Endothelial cell of umbilical vein (primary cell): ENCODE measurements at regions of chr13 and their contacts with region 1.

Region 1: DNA sequence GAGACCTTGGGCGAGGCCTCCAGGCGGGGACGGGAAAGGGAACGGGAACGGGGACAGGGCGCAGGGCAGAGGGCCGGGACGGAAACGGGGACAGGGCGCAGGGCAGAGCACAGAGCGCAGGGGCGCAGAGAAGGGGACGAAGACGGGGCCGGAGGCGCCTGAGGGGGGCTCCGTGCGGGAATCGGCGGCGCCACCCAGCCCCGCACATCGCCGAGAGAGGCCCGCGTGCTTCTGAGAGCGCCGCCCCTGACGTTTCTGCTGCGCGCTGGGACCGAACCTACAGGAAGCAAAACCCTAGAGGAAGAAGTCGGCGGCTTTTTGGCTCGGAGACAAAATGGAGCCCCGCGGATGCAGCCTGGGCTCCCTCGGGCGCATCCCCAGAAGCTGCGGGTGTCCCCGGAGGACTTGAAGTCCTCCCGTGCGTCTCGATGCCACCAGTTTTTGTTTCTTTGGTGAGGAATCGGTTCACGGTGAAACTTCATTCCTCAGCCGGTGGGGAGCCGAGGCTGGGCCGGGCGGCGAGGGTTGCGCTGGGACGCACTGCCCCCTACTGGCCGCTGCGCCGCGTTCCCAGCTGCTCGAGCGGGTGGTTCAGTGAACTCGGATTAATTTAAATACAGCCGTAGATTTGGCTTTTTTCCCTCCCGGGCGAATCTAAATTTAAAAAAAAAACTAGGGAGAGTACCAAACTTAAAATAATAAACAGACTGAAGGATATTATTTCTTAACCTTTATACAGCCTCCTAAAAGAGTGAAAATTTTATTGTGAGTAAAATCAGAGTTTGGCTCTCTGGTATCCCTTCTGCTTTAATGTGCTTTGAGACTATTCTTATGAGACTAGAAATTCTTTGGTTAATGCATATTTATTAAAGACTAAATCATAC is 350.0 kb upstream of the ARGLU1 start:
- DNase-seq: peak; percentile 91
- H3K4me3 ChIP-seq: peak overlapping the region; percentile 44 to 74 (median 51)
- H3K27ac ChIP-seq: peak overlapping the region; percentile 90
- H3K4me1 ChIP-seq: peaks cover 27% of the 10 kb centered on the region
- H3K27me3 ChIP-seq: peaks cover 7 to 13% of the 10 kb centered on the region in 2 experiments
- CTCF ChIP-seq: peak; percentile 92 to 97
- POLR2A ChIP-seq: peak; percentile 55

Region 2: GRCh38 chr13:104984296-104984818 is 1933.6 kb before region 1 on chr13:
- CTCF ChIA-PET with region 1: no interaction called
- POLR2A ChIA-PET with region 1: no interaction called
- dilution Hi-C with region 1: no loop called
- intact Hi-C with region 1: loop called (anchors 5 kb)
- DNase-seq: peak; percentile 92
- H3K4me3 ChIP-seq: peak overlapping the region in 1 of 3 experiments; percentile 25
- H3K27ac ChIP-seq: peak overlapping the region; percentile 78
- H3K4me1 ChIP-seq: peaks cover 26% of the 10 kb centered on the region
- H3K27me3 ChIP-seq: no peaks in the 10 kb centered on the region
- CTCF ChIP-seq: no peak
- POLR2A ChIP-seq: no peak

Region 3: DNA sequence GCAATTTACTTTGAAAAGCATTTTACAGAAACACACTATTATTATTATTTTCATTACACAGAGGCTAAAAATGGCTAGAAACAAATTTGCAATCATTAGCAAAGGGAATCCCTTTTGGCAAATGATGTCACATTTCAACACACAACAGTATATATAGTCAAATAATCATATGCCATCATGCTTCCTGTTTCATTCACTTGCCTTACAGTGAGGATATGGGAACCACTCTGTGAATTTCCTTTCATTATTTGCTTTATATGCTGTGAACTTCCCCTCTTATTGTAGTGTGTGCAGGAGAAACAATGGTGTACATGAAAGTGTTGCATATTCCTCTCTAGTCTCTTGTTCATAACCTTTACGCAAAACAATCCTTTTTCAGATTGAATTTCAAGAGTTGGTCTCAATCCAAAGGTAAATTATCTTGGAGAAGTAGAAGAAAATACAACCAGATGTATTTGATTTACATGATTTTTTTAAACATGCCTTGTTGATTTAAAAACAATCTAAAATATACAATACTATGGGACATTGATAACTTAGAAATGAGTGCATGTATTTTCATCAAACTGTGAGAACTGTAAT is 1039.7 kb before region 1 on chr13:
- CTCF ChIA-PET with region 1: no interaction called
- POLR2A ChIA-PET with region 1: no interaction called
- dilution Hi-C with region 1: no loop called
- intact Hi-C with region 1: loop called (anchors 1 kb)
- DNase-seq: peak; percentile 93
- H3K4me3 ChIP-seq: no peak overlapping the region
- H3K27ac ChIP-seq: peak overlapping the region; percentile 35
- H3K4me1 ChIP-seq: peaks cover 12% of the 10 kb centered on the region
- H3K27me3 ChIP-seq: no peaks in the 10 kb centered on the region
- CTCF ChIP-seq: no peak
- POLR2A ChIP-seq: no peak

Region 4: GRCh38 chr13:106318941-106319411 is 598.9 kb before region 1 on chr13:
- CTCF ChIA-PET with region 1: no interaction called
- POLR2A ChIA-PET with region 1: no interaction called
- dilution Hi-C with region 1: no loop called
- intact Hi-C with region 1: loop called (anchors 1 kb)
- DNase-seq: peak; percentile 97
- H3K4me3 ChIP-seq: no peak overlapping the region
- H3K27ac ChIP-seq: peak overlapping the region; percentile 89
- H3K4me1 ChIP-seq: peaks cover 20% of the 10 kb centered on the region
- H3K27me3 ChIP-seq: no peaks in the 10 kb centered on the region
- CTCF ChIP-seq: no peak
- POLR2A ChIP-seq: peak; percentile 38

Region 5: GRCh38 chr13:106573868-106574267 is 344.0 kb before region 1 on chr13:
- CTCF ChIA-PET with region 1: no interaction called
- POLR2A ChIA-PET with region 1: no interaction called
- dilution Hi-C with region 1: no loop called
- intact Hi-C with region 1: no loop called
- DNase-seq: no peak
- H3K4me3 ChIP-seq: no peak overlapping the region
- H3K27ac ChIP-seq: no peak overlapping the region
- H3K4me1 ChIP-seq: no peaks in the 10 kb centered on the region
- H3K27me3 ChIP-seq: no peaks in the 10 kb centered on the region
- CTCF ChIP-seq: no peak
- POLR2A ChIP-seq: no peak

Region 6: DNA sequence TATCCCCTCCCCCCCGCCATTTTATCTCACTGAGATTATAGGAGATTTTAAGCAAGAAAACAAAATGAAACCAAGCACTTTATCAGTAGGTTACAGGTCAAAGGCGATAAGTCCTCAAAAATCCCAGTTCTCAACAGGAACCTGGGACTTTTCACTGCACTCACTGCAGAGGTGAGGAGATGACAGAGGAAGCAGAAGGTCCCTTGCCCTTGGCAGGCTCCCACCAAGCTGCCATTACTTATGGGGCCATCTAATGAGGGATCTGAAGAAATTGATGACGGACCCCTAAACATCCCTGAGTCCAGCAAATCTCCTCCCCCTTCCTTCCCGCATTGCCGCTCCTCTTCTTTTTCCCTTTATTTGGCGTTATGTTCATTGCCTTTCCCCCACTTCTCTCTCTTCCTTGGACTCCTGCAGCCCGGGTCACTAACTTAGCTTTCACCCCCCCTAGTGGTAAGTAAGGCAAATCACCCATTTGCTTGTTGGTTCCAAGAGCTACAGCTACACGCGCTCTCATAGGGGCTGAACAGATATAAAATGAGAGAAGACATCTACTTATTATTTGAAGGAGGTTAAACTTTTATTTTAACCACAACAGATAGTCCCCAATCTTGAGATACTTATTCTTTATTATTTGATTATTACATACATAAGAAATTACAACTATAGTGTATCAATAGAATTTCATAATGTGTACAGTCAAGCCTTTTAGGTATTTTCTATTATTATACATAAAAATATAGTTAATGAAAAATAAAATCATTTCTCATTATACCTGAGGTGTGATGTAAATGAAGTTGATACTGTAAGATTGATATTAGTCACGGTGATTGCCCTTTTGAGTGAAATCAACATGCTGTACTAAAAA is 298.0 kb before region 1 on chr13:
- CTCF ChIA-PET with region 1: interaction called, 7 read pairs
- POLR2A ChIA-PET with region 1: no interaction called
- dilution Hi-C with region 1: no loop called
- intact Hi-C with region 1: loop called (anchors 1 kb)
- DNase-seq: peak; percentile 61
- H3K4me3 ChIP-seq: no peak overlapping the region
- H3K27ac ChIP-seq: no peak overlapping the region
- H3K4me1 ChIP-seq: peaks cover 9% of the 10 kb centered on the region
- H3K27me3 ChIP-seq: peaks cover 18 to 31% of the 10 kb centered on the region in 2 experiments
- CTCF ChIP-seq: peak; percentile 79 to 80
- POLR2A ChIP-seq: no peak

Region 7: DNA sequence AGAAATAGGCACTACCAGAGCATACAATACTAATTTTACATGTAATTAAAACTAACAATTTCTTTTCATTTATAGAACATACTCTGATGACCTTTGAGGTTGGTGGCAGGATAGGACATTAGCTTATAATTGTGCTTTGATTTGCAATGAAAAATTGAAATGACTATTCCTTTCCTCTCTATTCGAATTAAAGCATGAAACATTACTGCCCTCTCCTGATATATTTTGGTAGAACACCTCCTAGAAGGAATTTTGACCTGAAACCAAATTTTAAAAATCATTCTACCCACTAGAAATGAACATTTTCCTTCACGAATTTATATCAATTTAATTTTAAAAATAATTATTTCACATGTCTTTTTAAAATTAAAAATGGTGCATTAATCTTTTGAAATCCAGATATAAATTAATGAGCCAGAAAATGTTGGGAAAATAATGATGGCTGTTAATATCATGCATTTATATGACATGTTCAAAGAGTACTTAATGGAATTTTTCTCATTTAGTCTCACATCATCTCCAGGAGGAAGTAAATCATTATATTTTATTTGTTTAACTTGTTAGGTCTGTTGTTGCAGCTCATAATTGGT is 206.3 kb after region 1 on chr13:
- CTCF ChIA-PET with region 1: interaction called, 3 read pairs
- POLR2A ChIA-PET with region 1: no interaction called
- dilution Hi-C with region 1: no loop called
- intact Hi-C with region 1: loop called (anchors 1 kb)
- DNase-seq: peak; percentile 54
- H3K4me3 ChIP-seq: no peak overlapping the region
- H3K27ac ChIP-seq: no peak overlapping the region
- H3K4me1 ChIP-seq: no peaks in the 10 kb centered on the region
- H3K27me3 ChIP-seq: no peaks in the 10 kb centered on the region
- CTCF ChIP-seq: peak; percentile 20 to 22
- POLR2A ChIP-seq: no peak

Region 8: GRCh38 chr13:107373551-107373950 is 455.6 kb after region 1 on chr13:
- CTCF ChIA-PET with region 1: no interaction called
- POLR2A ChIA-PET with region 1: no interaction called
- dilution Hi-C with region 1: no loop called
- intact Hi-C with region 1: loop called (anchors 5 kb)
- DNase-seq: peak; percentile 91
- H3K4me3 ChIP-seq: no peak overlapping the region
- H3K27ac ChIP-seq: no peak overlapping the region
- H3K4me1 ChIP-seq: peaks cover 36% of the 10 kb centered on the region
- H3K27me3 ChIP-seq: no peaks in the 10 kb centered on the region
- CTCF ChIP-seq: peak; percentile 59 to 63
- POLR2A ChIP-seq: no peak